A673 (cell line): ENCODE measurements at regions of chr7 and their contacts with region 1.

Region 1: GRCh38 chr7:4807598-4808016 is 32.2 kb downstream of the AP5Z1 start:
- DNase-seq: peak; percentile 28
- H3K4me3 ChIP-seq: no peak overlapping the region
- H3K27ac ChIP-seq: no peak overlapping the region
- H3K4me1 ChIP-seq: no peaks in the 10 kb centered on the region
- H3K27me3 ChIP-seq: no peaks in the 10 kb centered on the region
- CTCF ChIP-seq: no peak

Region 2: GRCh38 chr7:4951903-4952636 is 144.5 kb after region 1 on chr7:
- CTCF ChIA-PET with region 1: interaction called, 12 read pairs
- POLR2A ChIA-PET with region 1: no interaction called
- intact Hi-C with region 1: no loop called
- DNase-seq: peak; percentile 37
- H3K4me3 ChIP-seq: no peak overlapping the region
- H3K27ac ChIP-seq: no peak overlapping the region
- H3K4me1 ChIP-seq: no peaks in the 10 kb centered on the region
- H3K27me3 ChIP-seq: no peaks in the 10 kb centered on the region
- CTCF ChIP-seq: no peak